ENCODE measurements at regions of chr20 and their contacts with region 1.

Region 1: GRCh38 chr20:37270576-37271420 is 9.2 kb upstream of the GHRH start:
- DNase-seq: peak; percentile 79
- ATAC-seq: peak; percentile 83
- H3K4me3 ChIP-seq: no peak overlapping the region
- H3K27ac ChIP-seq: peak overlapping the region; percentile 84
- H3K4me1 ChIP-seq: peaks cover 44% of the 10 kb centered on the region
- H3K27me3 ChIP-seq: no peaks in the 10 kb centered on the region
- CTCF ChIP-seq: no peak
- EP300 ChIP-seq: no peak; a peak in 1 of 4 replicates
- POLR2A ChIP-seq: no peak
- RAD21 ChIP-seq: peak; percentile 39; the same call in 1 of the 2 replicates

Region 2: GRCh38 chr20:36481381-36482043 is 789.3 kb before region 1 on chr20:
- CTCF ChIA-PET with region 1: no interaction called
- POLR2A ChIA-PET with region 1: no interaction called
- RAD21 ChIA-PET with region 1: no interaction called
- SMC1A ChIA-PET with region 1: no interaction called
- in situ Hi-C with region 1: no loop called
- intact Hi-C with region 1: no loop called
- DNase-seq: no peak
- ATAC-seq: no peak
- H3K4me3 ChIP-seq: no peak overlapping the region
- H3K27ac ChIP-seq: no peak overlapping the region
- H3K4me1 ChIP-seq: peaks cover 12% of the 10 kb centered on the region
- H3K27me3 ChIP-seq: no peaks in the 10 kb centered on the region
- CTCF ChIP-seq: no peak
- EP300 ChIP-seq: no peak
- POLR2A ChIP-seq: no peak
- RAD21 ChIP-seq: no peak

Region 3: DNA sequence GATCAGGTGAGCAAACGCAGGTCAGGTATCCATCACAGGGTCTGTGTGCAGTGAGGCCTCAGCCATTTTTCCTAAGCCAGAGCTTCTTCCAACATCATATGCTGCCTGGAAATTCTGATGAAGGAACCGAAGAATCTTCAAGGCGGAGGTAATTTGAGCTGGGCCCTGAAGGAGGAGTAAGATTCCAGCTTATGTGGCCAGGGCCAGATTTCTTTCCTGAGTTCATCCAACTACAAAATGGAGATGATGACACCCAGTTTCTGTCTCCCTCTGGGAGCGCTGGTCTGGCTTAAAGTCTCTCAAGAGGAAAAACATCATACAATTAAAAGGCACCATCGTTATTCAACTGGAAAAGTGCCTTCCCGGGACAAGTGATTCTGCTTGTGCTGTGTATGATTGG is 11.8 kb after region 1 on chr20:
- CTCF ChIA-PET with region 1: interaction called, 10 read pairs
- POLR2A ChIA-PET with region 1: interaction called, 3 read pairs
- RAD21 ChIA-PET with region 1: interaction called, 21 read pairs
- SMC1A ChIA-PET with region 1: interaction called, 12 read pairs
- in situ Hi-C with region 1: no loop called
- intact Hi-C with region 1: no loop called
- DNase-seq: no peak
- ATAC-seq: no peak
- H3K4me3 ChIP-seq: no peak overlapping the region
- H3K27ac ChIP-seq: no peak overlapping the region
- H3K4me1 ChIP-seq: peaks cover 2% of the 10 kb centered on the region
- H3K27me3 ChIP-seq: no peaks in the 10 kb centered on the region
- CTCF ChIP-seq: peak in 2 of 3 experiments; percentile 2 to 17; a peak in 1 of 6 replicates
- EP300 ChIP-seq: no peak
- POLR2A ChIP-seq: no peak
- RAD21 ChIP-seq: peak; percentile 22; the same call in 1 of the 2 replicates

Region 4: GRCh38 chr20:37295001-37295400 is 24.2 kb after region 1 on chr20:
- CTCF ChIA-PET with region 1: interaction called, 5 read pairs
- POLR2A ChIA-PET with region 1: interaction called, 11 read pairs
- RAD21 ChIA-PET with region 1: interaction called, 13 read pairs
- SMC1A ChIA-PET with region 1: interaction called, 17 read pairs
- in situ Hi-C with region 1: no loop called
- intact Hi-C with region 1: no loop called
- DNase-seq: no peak
- ATAC-seq: peak; percentile 26
- H3K4me3 ChIP-seq: no peak overlapping the region; the same call in 1 of the 2 replicates
- H3K27ac ChIP-seq: peak overlapping the region; percentile 66
- H3K4me1 ChIP-seq: peaks cover 63% of the 10 kb centered on the region
- H3K27me3 ChIP-seq: no peaks in the 10 kb centered on the region
- CTCF ChIP-seq: no peak
- EP300 ChIP-seq: no peak
- POLR2A ChIP-seq: no peak
- RAD21 ChIP-seq: no peak

Region 5: DNA sequence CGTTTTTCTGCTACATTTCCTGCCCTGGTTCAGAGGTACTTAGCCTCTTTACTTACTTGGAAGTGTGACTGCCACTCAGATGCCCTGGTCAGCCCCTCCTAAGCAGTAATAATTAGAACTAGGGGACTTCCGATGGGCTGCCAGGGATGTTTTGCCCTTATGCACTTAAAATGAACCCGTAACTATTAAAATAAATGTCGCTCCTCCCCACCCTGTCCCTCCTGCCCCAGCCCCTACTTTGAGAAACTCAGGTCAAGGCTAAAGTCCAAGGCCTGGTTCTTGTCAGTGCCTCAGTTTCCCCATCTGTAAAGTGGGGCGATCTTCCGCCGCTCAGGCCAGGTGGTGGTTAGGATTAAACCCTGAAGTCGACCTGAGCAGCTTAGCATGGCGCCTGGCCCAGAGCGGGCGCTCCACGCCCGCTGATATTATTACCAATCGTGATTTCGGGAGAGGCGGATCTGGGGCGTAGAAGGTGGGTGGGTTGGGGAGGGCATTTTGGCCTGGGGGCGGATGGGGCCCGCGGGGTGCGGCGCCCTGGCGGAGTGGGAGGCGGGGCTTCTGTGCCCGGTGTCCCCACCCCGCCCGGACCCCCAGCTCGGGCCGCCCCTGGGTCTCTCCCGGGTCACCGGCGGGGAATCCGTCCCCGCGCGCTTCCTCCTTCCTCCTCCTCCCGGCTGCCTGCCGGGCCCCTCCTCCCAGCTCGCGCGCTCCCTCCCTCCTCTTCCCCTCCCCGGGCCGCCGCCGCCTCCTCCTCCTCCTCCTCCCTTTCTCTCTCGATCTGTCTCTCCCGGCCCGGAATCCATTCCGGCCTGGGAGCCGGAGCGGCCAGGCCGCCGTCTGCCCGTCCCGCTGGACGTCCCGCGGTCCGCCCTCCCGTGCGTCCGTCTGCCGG is 74.8 kb after region 1 on chr20 and contains the start of gene SRC:
- CTCF ChIA-PET with region 1: interaction called, 11 read pairs
- POLR2A ChIA-PET with region 1: interaction called, 3 read pairs
- RAD21 ChIA-PET with region 1: interaction called, 6 read pairs
- SMC1A ChIA-PET with region 1: interaction called, 6 read pairs
- in situ Hi-C with region 1: no loop called
- intact Hi-C with region 1: no loop called
- DNase-seq: no peak
- ATAC-seq: peak; percentile 54
- H3K4me3 ChIP-seq: peak within 1 kb of the TSS; percentile 87
- H3K27ac ChIP-seq: peak within 1 kb of the TSS; percentile 90
- H3K4me1 ChIP-seq: peaks cover 29% of the 10 kb centered on the region
- H3K27me3 ChIP-seq: no peaks in the 10 kb centered on the region
- CTCF ChIP-seq: 0 out of 6 replicates have a peak, but pooled peaks of 1 of the 3 experiments have one; percentile 4
- EP300 ChIP-seq: no peak
- POLR2A ChIP-seq: peak; percentile 69
- RAD21 ChIP-seq: no peak
- polyA plus RNA-seq, gene SRC: 0.60 to 0.85 TPM

Region 6: DNA sequence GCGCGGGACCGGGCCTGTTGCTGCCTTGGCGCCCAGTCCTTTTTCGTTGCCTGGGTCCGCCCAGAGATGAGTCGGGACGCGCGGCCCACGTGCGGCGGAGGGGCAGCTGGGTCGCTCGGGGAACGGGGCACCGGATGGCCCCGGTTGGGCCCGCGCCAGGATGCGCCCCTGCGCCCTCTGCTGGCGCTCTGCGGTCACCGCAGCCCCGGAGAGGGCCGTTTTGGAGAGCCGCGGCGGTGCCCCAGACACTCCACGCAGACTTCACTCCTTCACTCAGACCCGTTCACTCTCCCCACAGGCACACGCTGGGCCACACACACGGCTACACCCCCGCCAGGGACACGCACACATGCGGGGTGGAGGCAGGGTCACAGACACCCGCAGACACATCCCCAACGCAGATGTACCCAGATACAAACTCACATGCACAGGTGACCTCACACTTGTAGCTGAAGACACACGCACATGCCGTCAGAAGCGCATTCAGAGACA is 113.9 kb after region 1 on chr20:
- CTCF ChIA-PET with region 1: interaction called, 44 read pairs
- POLR2A ChIA-PET with region 1: interaction called, 13 read pairs
- RAD21 ChIA-PET with region 1: interaction called, 28 read pairs
- SMC1A ChIA-PET with region 1: interaction called, 37 read pairs
- in situ Hi-C with region 1: loop called (anchors 5 kb)
- intact Hi-C with region 1: loop called (anchors 1 kb)
- DNase-seq: no peak
- ATAC-seq: peak; percentile 89
- H3K4me3 ChIP-seq: no peak overlapping the region
- H3K27ac ChIP-seq: peak overlapping the region; percentile 54
- H3K4me1 ChIP-seq: peaks cover 36% of the 10 kb centered on the region
- H3K27me3 ChIP-seq: no peaks in the 10 kb centered on the region
- CTCF ChIP-seq: peak; percentile 81 to 94 (median 87)
- EP300 ChIP-seq: no peak
- POLR2A ChIP-seq: no peak
- RAD21 ChIP-seq: peak; percentile 65

Region 7: DNA sequence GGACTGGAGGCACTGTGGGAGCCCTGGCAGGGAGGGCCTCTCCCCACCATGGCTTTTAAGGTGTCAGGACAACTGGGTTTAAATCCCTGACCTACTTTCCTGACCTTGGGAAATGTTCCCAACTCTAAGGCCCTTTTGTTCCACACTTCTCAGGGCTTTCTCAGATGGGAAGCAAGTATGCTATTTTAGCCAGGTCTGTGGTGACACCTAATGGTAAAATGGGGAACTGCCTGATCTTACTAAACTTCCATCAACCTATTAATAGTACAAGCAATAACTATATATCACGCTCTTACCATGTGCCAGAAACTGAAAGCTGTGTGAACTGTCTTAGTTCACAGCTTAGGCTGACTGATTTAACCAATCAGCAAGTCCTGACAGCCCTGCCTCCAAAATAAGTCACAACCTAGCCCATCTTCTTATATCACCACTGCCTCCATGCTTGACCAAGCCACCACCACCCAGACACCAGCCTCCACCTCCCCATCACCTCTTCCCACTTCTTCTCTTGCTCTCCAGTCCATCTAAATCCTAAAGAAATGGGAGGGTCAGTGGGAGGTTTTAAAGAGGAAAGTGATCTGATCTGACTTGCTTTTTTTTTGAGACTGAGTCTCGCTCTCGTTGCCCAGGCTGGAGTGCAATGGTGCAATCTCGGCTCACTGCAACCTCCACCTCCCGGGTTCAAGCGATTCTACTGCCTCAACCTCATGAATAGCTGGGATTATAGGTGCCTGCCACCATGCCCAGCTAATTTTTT is 263.8 kb after region 1 on chr20:
- CTCF ChIA-PET with region 1: interaction called, 282 read pairs
- POLR2A ChIA-PET with region 1: interaction called, 5 read pairs
- RAD21 ChIA-PET with region 1: interaction called, 119 read pairs
- SMC1A ChIA-PET with region 1: interaction called, 129 read pairs
- in situ Hi-C with region 1: loop called (anchors 5 kb)
- intact Hi-C with region 1: loop called (anchors 1 kb)
- DNase-seq: peak; percentile 90
- ATAC-seq: peak; percentile 98
- H3K4me3 ChIP-seq: no peak overlapping the region
- H3K27ac ChIP-seq: peak overlapping the region; percentile 57
- H3K4me1 ChIP-seq: peaks cover 18% of the 10 kb centered on the region
- H3K27me3 ChIP-seq: no peaks in the 10 kb centered on the region
- CTCF ChIP-seq: peak; percentile 69 to 88 (median 77)
- EP300 ChIP-seq: peak; percentile 47 to 59; a peak in 2 of 4 replicates
- POLR2A ChIP-seq: no peak
- RAD21 ChIP-seq: peak; percentile 97

Measured in GM12878 (cell line).